A549 (cell line): ENCODE measurements at regions of chr22 and their contacts with region 1.

Region 1: GRCh38 chr22:30444632-30445437 is 19.3 kb downstream of the MTFP1 start:
- DNase-seq: peak; percentile 62 to 64
- ATAC-seq: peak; percentile 85 to 88; a peak in 5 of 6 replicates
- H3K4me3 ChIP-seq: no peak overlapping the region
- H3K27ac ChIP-seq: peak overlapping the region; percentile 63 to 78
- H3K4me1 ChIP-seq: peaks cover 10% of the 10 kb centered on the region; the same call in 2 of the 3 replicates
- CTCF ChIP-seq: peak; percentile 60
- EP300 ChIP-seq: no peak
- POLR2A ChIP-seq: 0 out of 2 replicates have a peak, but pooled peaks have one; percentile 6
- RAD21 ChIP-seq: peak; percentile 70 to 76

Region 2: DNA sequence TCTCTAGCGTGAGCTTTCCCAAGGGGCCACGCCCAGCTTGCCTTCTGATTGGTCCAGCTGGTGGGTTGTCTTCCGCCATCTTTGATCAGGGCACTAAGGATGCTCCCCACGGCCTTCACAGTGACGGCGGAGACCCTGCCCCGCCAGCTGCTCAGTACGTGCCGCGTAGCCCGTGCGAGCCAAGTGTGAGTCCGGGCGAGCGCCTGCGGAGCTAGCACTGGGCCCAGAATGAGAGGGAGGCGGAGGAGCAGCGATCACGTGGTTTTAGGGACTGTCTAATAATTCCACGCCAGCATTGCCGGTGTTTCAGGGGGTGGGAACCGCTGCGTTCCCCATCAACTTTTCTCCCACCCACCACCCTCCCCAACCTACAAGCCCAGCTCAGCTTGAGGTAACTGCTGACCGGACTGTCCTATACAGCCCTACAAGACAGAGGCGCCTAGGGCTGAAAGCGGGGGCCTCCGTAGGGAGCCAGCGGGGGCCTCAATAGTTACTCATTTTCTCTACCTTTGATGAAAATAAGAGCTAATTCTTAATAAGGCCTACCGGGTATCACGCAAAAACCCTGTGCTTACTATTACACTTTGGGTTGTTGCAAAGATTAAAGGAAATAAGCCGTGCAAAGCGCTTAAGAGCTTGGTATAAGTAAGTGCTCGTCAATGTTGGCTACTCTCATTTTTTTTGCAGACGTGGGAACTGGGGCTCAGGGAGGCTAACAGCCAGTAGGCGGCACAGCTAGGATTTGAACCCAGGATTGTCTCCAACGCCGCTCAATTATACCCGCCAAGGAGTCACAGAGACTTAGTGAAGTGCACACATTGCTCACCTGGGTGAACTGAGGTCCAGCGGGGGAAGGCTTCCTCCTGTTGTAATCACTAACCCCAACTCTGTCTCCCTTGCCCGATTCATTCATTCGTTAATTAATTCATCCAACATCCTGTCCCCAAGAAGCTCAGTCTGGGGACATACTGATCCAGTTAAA is 20.6 kb before region 1 on chr22:
- CTCF ChIA-PET with region 1: interaction called, 17 read pairs
- POLR2A ChIA-PET with region 1: interaction called, 4 read pairs
- DNase-seq: peak; percentile 95 to 99
- ATAC-seq: peak; percentile 79 to 86
- H3K4me3 ChIP-seq: peak overlapping the region; percentile 68
- H3K27ac ChIP-seq: peak overlapping the region; percentile 97
- H3K4me1 ChIP-seq: peaks cover 43% of the 10 kb centered on the region
- CTCF ChIP-seq: no peak
- EP300 ChIP-seq: no peak
- POLR2A ChIP-seq: peak; percentile 37; the same call in 1 of the 2 replicates
- RAD21 ChIP-seq: no peak

Region 3: DNA sequence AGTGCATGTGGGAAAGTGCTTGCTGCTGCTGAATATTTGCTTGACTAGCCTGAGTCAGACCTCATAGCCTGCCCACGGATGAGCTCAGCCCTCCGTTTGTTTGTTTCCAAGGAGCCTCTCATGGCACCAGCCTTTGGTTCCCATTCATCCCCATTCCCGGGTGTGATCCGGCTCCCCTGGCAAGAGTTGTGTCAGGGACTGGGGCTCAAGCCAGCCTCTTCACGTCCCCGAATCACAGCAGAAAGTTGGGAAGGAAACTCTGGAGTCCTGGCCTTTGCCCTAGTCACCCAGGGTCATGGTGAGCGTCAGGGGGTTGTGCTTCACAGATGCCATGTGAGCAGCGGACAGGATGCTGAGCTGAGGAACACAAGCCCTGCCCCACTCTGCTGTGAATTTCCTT is 13.1 kb after region 1 on chr22:
- CTCF ChIA-PET with region 1: interaction called, 14 read pairs
- POLR2A ChIA-PET with region 1: no interaction called
- DNase-seq: no peak
- ATAC-seq: peak in 1 of 2 experiments; percentile 54; a peak in 3 of 6 replicates
- H3K4me3 ChIP-seq: no peak overlapping the region
- H3K27ac ChIP-seq: no peak overlapping the region
- H3K4me1 ChIP-seq: no peaks in the 10 kb centered on the region
- CTCF ChIP-seq: no peak
- EP300 ChIP-seq: no peak
- POLR2A ChIP-seq: no peak
- RAD21 ChIP-seq: no peak

Region 4: DNA sequence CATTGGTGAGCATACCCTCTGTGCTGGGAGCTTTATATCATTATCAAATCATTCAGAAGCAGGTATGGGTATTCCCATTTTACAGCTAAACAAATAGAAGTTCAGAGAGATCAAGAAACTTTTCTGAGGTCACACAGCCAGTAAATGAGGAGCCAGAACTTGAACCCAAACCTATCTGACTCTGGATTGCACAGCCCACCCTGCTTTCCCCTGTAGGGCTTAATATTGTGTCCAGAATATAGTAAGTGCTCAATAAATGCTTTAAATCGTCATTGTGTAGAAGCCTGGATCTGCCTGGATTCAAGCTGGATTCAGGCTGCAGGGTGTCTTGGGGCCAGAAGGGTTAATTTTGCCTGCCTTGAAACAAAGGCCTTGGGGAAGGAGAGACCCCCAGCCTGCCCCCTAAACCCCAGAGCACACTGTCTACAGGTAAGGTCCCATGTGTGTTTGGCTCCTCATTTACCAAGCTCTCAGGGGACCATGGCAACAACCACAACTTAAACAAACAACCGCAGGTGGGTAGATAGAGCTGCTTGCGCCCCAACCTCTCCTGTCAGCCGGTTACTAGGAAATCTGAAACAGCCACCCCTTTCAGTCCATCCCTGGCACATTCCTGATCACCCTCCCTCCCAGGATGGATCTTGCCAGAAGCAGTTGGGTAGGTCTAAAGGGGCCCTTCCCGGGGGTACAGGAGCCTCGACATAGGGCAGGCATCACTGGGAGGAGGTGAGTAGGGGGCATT is 30.0 kb after region 1 on chr22:
- CTCF ChIA-PET with region 1: interaction called, 10 read pairs
- POLR2A ChIA-PET with region 1: no interaction called
- DNase-seq: no peak
- ATAC-seq: no peak
- H3K4me3 ChIP-seq: no peak overlapping the region
- H3K27ac ChIP-seq: no peak overlapping the region
- H3K4me1 ChIP-seq: no peaks in the 10 kb centered on the region
- CTCF ChIP-seq: no peak
- EP300 ChIP-seq: no peak
- POLR2A ChIP-seq: no peak
- RAD21 ChIP-seq: no peak

Region 5: GRCh38 chr22:30485362-30485988 is 40.6 kb after region 1 on chr22:
- CTCF ChIA-PET with region 1: interaction called, 24 read pairs
- POLR2A ChIA-PET with region 1: no interaction called
- DNase-seq: peak; percentile 61 to 84
- ATAC-seq: peak; percentile 90 to 97
- H3K4me3 ChIP-seq: no peak overlapping the region
- H3K27ac ChIP-seq: peak overlapping the region in 1 of 2 experiments; percentile 66; a peak in 3 of 6 replicates
- H3K4me1 ChIP-seq: peaks cover 18% of the 10 kb centered on the region
- CTCF ChIP-seq: peak; percentile 64
- EP300 ChIP-seq: no peak
- POLR2A ChIP-seq: no peak
- RAD21 ChIP-seq: peak; percentile 69 to 72